ENCODE measurements at regions of chr14 and their contacts with region 1.

Region 1: DNA sequence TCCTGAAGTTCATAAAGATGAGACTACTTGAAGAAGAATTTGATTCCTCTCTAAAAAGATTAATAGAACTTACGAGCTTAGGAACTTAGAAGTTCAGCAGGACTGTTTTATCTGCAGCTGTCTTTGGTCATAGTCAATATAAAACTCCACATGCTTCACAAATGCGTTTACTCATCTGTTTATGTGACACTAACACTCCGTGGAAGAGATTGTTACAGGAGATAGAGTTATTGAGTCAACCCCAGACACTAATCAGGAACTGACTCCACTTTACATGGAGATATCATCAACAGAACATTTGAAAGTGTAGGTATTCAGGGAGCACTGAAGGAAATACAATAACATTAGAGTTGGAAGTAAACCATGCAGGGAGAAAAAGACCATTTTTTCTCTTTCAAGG is 92.8 kb downstream of the LRFN5 start:
- DNase-seq: no peak
- ATAC-seq: no peak

Region 2: GRCh38 chr14:42322531-42323284 is 623.2 kb after region 1 on chr14:
- intact Hi-C with region 1: no loop called
- DNase-seq: no peak
- ATAC-seq: peak; percentile 24

Region 3: DNA sequence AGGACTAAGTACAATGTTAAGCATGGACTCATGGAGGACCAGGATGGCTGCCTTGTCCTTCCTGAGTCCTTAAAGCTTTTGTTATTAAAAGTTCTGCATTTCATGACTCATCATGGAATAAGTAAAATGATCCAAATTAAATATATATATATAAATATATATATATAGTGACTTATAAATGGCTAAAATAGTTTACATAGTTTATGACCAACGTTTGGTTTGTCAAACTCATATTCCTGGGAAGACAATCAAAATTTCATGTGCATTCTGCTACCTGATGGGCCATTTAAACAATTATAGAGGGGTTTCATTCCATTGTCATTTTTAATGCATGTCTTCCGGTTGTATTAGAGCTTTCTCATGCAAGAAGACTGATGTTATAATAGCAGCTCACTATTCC is 1616.9 kb after region 1 on chr14:
- intact Hi-C with region 1: loop called (anchors 10 kb)
- DNase-seq: no peak
- ATAC-seq: no peak